PC-3 (cell line): ENCODE measurements at regions of chr4 and their contacts with region 1.

Region 1: DNA sequence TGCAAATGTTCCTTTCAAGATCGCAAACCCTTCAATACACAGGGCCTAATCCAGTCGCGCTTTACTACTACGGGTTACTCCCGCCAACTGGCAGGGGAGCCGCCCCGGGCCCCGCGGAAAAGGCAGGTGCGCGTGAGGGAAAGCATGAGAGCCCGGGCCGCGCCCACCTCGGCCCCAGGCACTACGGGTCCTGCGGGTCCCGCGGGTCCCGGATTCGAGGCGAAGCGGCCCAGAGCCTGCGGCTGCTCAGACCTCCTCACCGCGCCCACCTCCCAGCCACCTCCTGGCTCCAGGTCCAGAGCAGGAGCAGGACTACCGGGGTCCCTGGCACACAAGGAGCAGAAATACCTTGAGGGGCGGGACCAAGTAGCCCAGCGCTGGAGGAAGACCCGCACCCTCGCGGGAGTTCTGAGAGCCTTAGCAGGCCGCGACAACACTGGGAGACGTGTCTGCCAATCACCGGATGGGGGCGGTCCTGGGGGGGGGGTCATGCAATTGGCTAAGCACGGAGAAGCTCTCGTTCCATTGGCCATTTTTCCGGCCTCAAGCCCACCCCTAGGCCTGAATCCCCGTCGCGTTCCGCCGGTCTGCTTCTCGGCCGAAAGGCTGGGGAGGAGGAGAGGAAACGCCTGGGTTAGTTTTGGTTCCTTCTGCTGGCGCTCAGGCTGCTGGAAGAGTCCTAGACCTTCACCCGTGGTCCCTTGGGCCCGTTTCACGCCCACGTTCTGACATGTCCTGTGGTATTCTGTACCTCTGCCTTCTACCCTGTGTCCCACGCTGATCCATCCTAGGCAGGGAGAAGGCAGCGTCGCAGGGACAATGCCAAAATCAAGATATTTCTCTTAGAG is 29.0 kb downstream of the ERVMER34-1 start:
- DNase-seq: peak; percentile 98
- ATAC-seq: peak; percentile 98
- H3K4me3 ChIP-seq: peak overlapping the region; percentile 80
- H3K27ac ChIP-seq: 0 out of 2 replicates have a peak overlapping the region, but pooled peaks have one; percentile 10
- H3K4me1 ChIP-seq: peaks cover 11% of the 10 kb centered on the region
- H3K27me3 ChIP-seq: no peaks in the 10 kb centered on the region
- CTCF ChIP-seq: no peak

Region 2: GRCh38 chr4:52410971-52411370 is 311.2 kb before region 1 on chr4:
- CTCF ChIA-PET with region 1: no interaction called
- POLR2A ChIA-PET with region 1: no interaction called
- intact Hi-C with region 1: no loop called
- DNase-seq: no peak
- ATAC-seq: no peak
- H3K4me3 ChIP-seq: no peak overlapping the region
- H3K27ac ChIP-seq: no peak overlapping the region
- H3K4me1 ChIP-seq: peaks cover 10% of the 10 kb centered on the region; the same call in 1 of the 2 replicates
- H3K27me3 ChIP-seq: peaks cover 7% of the 10 kb centered on the region; the same call in 1 of the 2 replicates
- CTCF ChIP-seq: no peak

Region 3: GRCh38 chr4:52423967-52424366 is 298.2 kb before region 1 on chr4:
- CTCF ChIA-PET with region 1: no interaction called
- POLR2A ChIA-PET with region 1: no interaction called
- intact Hi-C with region 1: no loop called
- DNase-seq: peak; percentile 18
- ATAC-seq: no peak
- H3K4me3 ChIP-seq: no peak overlapping the region
- H3K27ac ChIP-seq: no peak overlapping the region
- H3K4me1 ChIP-seq: no peaks in the 10 kb centered on the region
- H3K27me3 ChIP-seq: peaks cover 5% of the 10 kb centered on the region; the same call in 1 of the 2 replicates
- CTCF ChIP-seq: no peak

Region 4: GRCh38 chr4:52861879-52862616 is 139.9 kb after region 1 on chr4 and contains the start of gene RASL11B:
- CTCF ChIA-PET with region 1: no interaction called
- POLR2A ChIA-PET with region 1: interaction called, 4 read pairs
- intact Hi-C with region 1: loop called (anchors 1 kb)
- DNase-seq: peak; percentile 85
- ATAC-seq: peak; percentile 98
- H3K4me3 ChIP-seq: peak within 1 kb of the TSS; percentile 71
- H3K27ac ChIP-seq: no peak within 1 kb of the TSS
- H3K4me1 ChIP-seq: peaks cover 5% of the 10 kb centered on the region
- H3K27me3 ChIP-seq: 0 out of 2 replicates have a peak, but pooled peaks cover 6% of the 10 kb centered on the region
- CTCF ChIP-seq: no peak
- total RNA-seq, gene RASL11B: 0.07 and 2.1 TPM in 2 replicates

Region 5: DNA sequence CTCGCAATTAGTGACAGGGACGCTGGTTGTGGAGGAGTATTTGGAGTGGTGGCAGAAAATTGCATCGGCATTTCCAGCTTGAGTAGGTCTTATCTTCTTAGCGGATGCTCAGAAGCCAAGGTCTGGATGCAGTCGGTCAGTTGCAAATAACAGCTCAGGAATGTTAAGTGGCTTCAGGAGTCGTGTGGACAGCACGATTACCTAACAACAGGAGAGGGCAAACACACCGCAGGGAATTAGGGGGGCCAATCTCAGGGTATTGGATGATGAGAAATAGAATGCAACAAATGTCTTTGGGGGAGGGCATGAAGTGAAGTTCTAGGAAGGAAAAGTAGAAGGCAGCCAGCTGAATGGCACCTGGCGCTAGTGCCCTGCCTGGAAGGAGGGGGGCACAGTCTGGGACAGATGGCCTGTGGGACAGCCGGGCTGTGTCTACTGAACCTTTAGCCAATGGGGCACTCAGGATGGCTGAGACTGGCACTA is 151.7 kb after region 1 on chr4:
- CTCF ChIA-PET with region 1: no interaction called
- POLR2A ChIA-PET with region 1: no interaction called
- intact Hi-C with region 1: no loop called
- DNase-seq: no peak
- ATAC-seq: no peak
- H3K4me3 ChIP-seq: no peak overlapping the region
- H3K27ac ChIP-seq: no peak overlapping the region
- H3K4me1 ChIP-seq: no peaks in the 10 kb centered on the region
- H3K27me3 ChIP-seq: no peaks in the 10 kb centered on the region
- CTCF ChIP-seq: no peak

Region 6: GRCh38 chr4:52894443-52894842 is 172.3 kb after region 1 on chr4:
- CTCF ChIA-PET with region 1: no interaction called
- POLR2A ChIA-PET with region 1: no interaction called
- intact Hi-C with region 1: no loop called
- DNase-seq: no peak
- ATAC-seq: no peak
- H3K4me3 ChIP-seq: no peak overlapping the region
- H3K27ac ChIP-seq: no peak overlapping the region
- H3K4me1 ChIP-seq: no peaks in the 10 kb centered on the region
- H3K27me3 ChIP-seq: no peaks in the 10 kb centered on the region
- CTCF ChIP-seq: no peak